ENCODE measurements at regions of chr3 and their contacts with region 1.

Region 1: DNA sequence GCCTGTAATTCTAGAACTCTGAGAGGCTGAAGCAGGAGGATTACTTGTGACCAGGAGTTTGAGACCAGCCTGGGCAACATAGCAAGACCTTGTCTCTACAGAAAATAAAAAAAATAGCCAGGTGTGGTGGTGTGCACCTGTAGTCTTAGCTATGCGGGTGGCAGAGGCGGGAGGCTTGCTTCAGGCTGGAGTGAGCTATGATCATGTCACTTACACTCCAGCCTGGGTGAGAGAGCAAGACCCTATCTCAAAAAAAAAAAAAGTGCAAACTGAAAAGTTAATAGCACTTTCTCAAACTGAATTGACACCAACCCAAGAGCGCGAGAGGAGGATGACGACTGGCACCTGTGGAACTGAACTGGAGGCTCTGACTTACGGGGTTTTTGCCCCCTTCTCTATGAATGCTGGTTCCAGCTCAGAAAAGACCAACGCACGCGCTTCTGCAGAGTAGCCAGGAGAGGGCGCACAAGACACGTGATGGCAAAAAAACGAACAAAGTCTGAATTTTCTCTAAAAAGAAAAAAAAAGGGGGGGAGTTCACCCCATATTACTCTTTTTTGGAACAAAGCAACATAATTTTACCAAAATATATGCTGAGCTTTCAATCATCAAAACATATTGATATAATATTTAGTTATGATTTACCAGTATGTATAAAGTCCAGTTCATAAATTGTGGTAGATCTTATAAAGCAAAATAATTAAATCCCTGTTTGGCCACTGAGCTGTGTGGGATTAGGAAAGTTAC is 23.7 kb downstream of the CFAP92 start:
- H3K4me3 ChIP-seq: no peak overlapping the region
- H3K27ac ChIP-seq: no peak overlapping the region
- H3K4me1 ChIP-seq: no peaks in the 10 kb centered on the region
- CTCF ChIP-seq: peak; percentile 24; the same call in 1 of the 2 replicates

Region 2: DNA sequence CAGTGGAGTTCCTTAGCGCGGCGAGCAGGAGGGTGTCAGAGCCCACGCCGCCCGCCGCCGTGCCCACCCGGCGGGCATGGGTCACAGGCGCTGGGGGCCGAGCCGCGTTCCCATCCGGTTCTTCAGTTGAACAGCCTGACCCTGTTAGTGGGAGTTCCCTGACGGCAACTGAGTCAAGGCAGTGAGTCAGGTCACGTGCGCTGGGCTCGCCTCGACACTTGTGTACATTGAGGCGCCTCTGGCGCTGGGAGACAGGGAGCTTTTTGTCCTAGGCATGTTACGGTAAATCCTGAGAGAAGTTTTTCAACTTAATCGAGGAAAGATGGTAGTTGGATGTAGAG is 243.5 kb before region 1 on chr3:
- CTCF ChIA-PET with region 1: no interaction called
- POLR2A ChIA-PET with region 1: no interaction called
- H3K4me3 ChIP-seq: peak overlapping the region; percentile 99
- H3K27ac ChIP-seq: peak overlapping the region; percentile 63; the same call in 1 of the 2 replicates
- H3K4me1 ChIP-seq: no peaks in the 10 kb centered on the region
- CTCF ChIP-seq: no peak

Region 3: GRCh38 chr3:128984596-128984995 is 14.4 kb after region 1 on chr3:
- CTCF ChIA-PET with region 1: interaction called, 23 read pairs
- POLR2A ChIA-PET with region 1: no interaction called
- H3K4me3 ChIP-seq: no peak overlapping the region
- H3K27ac ChIP-seq: no peak overlapping the region
- H3K4me1 ChIP-seq: no peaks in the 10 kb centered on the region
- CTCF ChIP-seq: no peak

Region 4: GRCh38 chr3:128993461-128994173 is 23.5 kb after region 1 on chr3 and contains the start of gene CFAP92:
- CTCF ChIA-PET with region 1: interaction called, 25 read pairs
- POLR2A ChIA-PET with region 1: no interaction called
- H3K4me3 ChIP-seq: peak within 1 kb of the TSS; percentile 44
- H3K27ac ChIP-seq: no peak within 1 kb of the TSS; the same call in 1 of the 2 replicates
- H3K4me1 ChIP-seq: no peaks in the 10 kb centered on the region
- CTCF ChIP-seq: no peak

Region 5: DNA sequence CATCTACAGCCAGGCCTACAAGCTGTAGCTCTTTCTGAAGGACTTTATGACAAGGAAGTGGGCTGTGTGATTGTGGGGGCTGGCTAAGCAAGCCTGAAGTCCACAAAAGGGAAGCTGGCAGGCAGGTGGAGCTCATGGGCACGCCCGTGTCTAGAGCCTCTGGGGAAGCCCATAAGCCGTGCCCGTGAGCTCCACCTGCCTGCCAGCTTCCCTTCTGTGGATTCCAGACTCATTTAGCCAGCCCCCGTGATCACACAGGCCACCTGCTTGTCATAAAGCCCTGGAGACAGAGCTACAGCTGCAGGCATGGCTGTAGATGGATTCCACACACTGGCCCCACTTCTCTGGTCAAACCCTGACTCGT is 46.2 kb after region 1 on chr3:
- CTCF ChIA-PET with region 1: interaction called, 16 read pairs
- POLR2A ChIA-PET with region 1: no interaction called
- H3K4me3 ChIP-seq: no peak overlapping the region
- H3K27ac ChIP-seq: no peak overlapping the region
- H3K4me1 ChIP-seq: no peaks in the 10 kb centered on the region
- CTCF ChIP-seq: peak; percentile 10; the same call in 1 of the 2 replicates

Region 6: GRCh38 chr3:129026728-129027543 is 56.8 kb after region 1 on chr3:
- CTCF ChIA-PET with region 1: interaction called, 10 read pairs
- POLR2A ChIA-PET with region 1: no interaction called
- H3K4me3 ChIP-seq: peak overlapping the region; percentile 49
- H3K27ac ChIP-seq: peak overlapping the region; percentile 1; the same call in 1 of the 2 replicates
- H3K4me1 ChIP-seq: no peaks in the 10 kb centered on the region
- CTCF ChIP-seq: 0 out of 2 replicates have a peak, but pooled peaks have one; percentile 31

Region 7: DNA sequence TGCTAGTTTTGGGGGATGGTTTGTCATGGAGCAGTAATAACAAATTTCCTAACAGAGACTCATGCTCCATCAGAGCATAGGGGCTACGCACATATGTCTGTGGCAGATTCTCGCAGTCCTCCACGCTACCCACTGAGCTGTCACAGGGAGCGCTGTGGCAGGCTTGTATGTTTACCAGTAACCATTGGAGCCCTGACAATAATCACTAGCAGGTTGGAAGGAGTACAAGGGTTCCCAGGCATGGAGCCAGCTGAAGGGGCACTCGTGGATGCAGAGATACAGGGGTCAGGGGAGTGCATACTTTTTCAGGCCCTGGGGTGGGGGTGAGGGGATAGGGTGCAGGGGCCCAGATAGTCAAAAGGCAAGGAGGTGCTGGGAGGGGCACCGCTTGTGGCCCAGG is 82.5 kb after region 1 on chr3:
- CTCF ChIA-PET with region 1: interaction called, 51 read pairs
- POLR2A ChIA-PET with region 1: interaction called, 5 read pairs
- H3K4me3 ChIP-seq: no peak overlapping the region
- H3K27ac ChIP-seq: no peak overlapping the region
- H3K4me1 ChIP-seq: no peaks in the 10 kb centered on the region
- CTCF ChIP-seq: no peak

Region 8: GRCh38 chr3:129240436-129240835 is 270.3 kb after region 1 on chr3:
- CTCF ChIA-PET with region 1: interaction called, 109 read pairs
- POLR2A ChIA-PET with region 1: interaction called, 4 read pairs
- H3K4me3 ChIP-seq: no peak overlapping the region
- H3K27ac ChIP-seq: no peak overlapping the region
- H3K4me1 ChIP-seq: no peaks in the 10 kb centered on the region
- CTCF ChIP-seq: no peak

Measured in HEK293 (cell line).